Activated CD8-positive, alpha-beta memory T cell treated with anti-CD3 and anti-CD28 coated beads, Interleukin-2, amount 10 ng/mL, durations not matched to agents 7 days and 5 days (primary cell): ENCODE measurements at regions of chr4 and their contacts with region 1.

Region 1: GRCh38 chr4:40309250-40309774 is 25.8 kb upstream of the CHRNA9 start:
- DNase-seq: peak; percentile 96
- ATAC-seq: peak; percentile 75
- H3K4me3 Mint-ChIP-seq: peak overlapping the region; percentile 75
- H3K27ac Mint-ChIP-seq: peak overlapping the region; percentile 99
- H3K4me1 Mint-ChIP-seq: peaks cover 75% of the 10 kb centered on the region
- H3K27me3 Mint-ChIP-seq: no peaks in the 10 kb centered on the region

Region 2: GRCh38 chr4:40149960-40150385 is 159.3 kb before region 1 on chr4:
- CTCF ChIA-PET with region 1: interaction called, 10 read pairs
- DNase-seq: peak; percentile 82
- ATAC-seq: peak; percentile 88
- H3K4me3 Mint-ChIP-seq: no peak overlapping the region
- H3K27ac Mint-ChIP-seq: peak overlapping the region; percentile 42
- H3K4me1 Mint-ChIP-seq: peaks cover 17% of the 10 kb centered on the region
- H3K27me3 Mint-ChIP-seq: no peaks in the 10 kb centered on the region

Region 3: DNA sequence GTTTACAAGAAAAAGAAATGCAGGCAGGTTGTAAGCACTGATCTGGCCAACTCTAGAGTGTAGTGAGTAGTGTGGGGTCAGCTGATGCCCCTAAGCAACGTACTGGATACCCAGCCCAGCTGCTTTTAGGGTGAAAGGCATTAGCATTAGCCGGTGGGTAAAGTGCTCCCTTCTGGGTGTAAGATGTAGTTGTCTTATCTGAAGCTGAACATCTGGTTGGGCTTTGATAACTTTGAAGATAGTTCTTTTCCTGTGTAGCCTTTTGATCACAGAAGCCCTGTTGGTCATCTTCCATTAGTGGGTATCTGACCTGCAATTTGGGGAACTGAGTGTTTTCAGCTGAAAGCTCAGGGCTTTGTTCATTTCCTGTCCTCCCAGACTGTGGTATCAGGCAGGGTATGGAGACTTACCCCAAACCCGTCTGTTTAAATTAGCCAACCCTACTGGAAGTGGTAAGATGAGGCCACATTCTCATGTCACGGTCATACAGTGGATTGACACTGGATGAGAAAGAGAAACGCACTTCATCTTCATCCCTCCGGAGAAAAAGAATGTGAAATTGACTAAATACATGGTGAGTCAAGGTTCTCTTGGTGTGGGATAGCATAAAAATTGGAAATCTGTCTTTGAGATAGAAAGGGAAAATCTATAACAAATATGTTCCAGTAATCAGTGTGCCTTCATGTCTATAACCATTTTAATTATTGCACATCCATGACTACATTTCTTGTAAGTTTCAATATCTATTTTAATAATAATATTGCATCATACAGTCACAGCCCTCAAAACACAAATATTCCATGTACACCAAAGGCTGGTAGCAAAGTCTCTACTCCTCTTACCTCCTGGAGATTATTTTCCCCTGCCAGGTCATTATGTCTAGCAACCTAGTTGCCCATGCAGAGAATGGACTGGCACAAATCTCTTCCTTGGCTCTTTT is 103.8 kb before region 1 on chr4:
- CTCF ChIA-PET with region 1: interaction called, 17 read pairs
- DNase-seq: peak; percentile 80
- ATAC-seq: peak; percentile 50
- H3K4me3 Mint-ChIP-seq: peak overlapping the region; percentile 98
- H3K27ac Mint-ChIP-seq: peak overlapping the region; percentile 99
- H3K4me1 Mint-ChIP-seq: peaks cover 62% of the 10 kb centered on the region
- H3K27me3 Mint-ChIP-seq: no peaks in the 10 kb centered on the region

Region 4: DNA sequence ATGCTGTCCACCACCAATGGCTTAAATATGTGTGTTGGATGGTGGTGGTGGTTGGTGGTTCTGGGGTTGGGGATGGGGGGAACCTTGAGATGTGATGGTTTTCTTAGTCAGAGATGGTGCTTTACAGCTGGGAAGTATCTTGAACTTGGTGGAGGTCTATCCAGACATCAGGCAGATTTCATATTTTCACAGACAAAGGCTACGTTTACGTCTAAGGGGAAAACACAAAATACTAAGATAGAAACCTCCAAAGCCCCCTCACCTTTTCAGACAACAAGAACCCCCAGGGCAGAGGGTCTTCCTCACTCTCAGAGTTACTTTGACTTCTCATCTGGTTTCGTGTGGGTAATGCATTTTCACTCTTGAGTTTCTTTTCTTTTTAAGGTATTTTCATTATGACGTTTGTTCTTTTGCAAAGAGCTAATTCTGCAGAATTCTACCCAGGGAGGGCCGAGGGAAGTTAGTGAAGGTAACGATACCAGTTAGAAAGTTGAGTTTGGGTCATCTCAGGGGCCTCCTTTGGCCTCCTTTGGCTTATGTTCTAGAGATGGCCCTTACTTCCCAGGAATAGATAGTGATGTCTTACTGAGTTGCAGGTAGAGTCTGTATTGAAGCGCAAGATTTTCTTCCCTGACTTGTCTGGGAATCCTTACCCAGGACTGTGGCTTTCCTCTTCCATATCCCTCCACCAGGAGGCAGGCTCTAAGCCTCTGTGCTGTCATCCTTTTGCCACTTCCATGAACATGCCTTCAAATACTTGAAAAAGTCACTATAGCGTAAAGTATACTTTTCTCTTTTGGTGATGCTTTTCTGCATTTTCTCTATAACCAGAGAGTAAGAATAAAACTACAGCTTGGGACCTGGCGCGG is 80.6 kb before region 1 on chr4:
- CTCF ChIA-PET with region 1: interaction called, 83 read pairs
- DNase-seq: peak; percentile 62
- ATAC-seq: peak; percentile 5
- H3K4me3 Mint-ChIP-seq: peak overlapping the region; percentile 58
- H3K27ac Mint-ChIP-seq: peak overlapping the region; percentile 93
- H3K4me1 Mint-ChIP-seq: peaks cover 95% of the 10 kb centered on the region
- H3K27me3 Mint-ChIP-seq: no peaks in the 10 kb centered on the region

Region 5: GRCh38 chr4:40255393-40256281 is 53.7 kb before region 1 on chr4:
- CTCF ChIA-PET with region 1: interaction called, 14 read pairs
- DNase-seq: no peak
- ATAC-seq: peak; percentile 28
- H3K4me3 Mint-ChIP-seq: peak overlapping the region; percentile 40
- H3K27ac Mint-ChIP-seq: peak overlapping the region; percentile 93
- H3K4me1 Mint-ChIP-seq: peaks cover 69% of the 10 kb centered on the region
- H3K27me3 Mint-ChIP-seq: no peaks in the 10 kb centered on the region

Region 6: GRCh38 chr4:40340030-40340429 is 30.7 kb after region 1 on chr4:
- CTCF ChIA-PET with region 1: no interaction called
- DNase-seq: no peak
- ATAC-seq: peak; percentile 49
- H3K4me3 Mint-ChIP-seq: no peak overlapping the region
- H3K27ac Mint-ChIP-seq: no peak overlapping the region
- H3K4me1 Mint-ChIP-seq: peaks cover 10% of the 10 kb centered on the region
- H3K27me3 Mint-ChIP-seq: peaks cover 12% of the 10 kb centered on the region